Endothelial cell of umbilical vein (primary cell): ENCODE measurements at regions of chr4 and their contacts with region 1.

Region 1: GRCh38 chr4:25986807-25987206 is 72.8 kb downstream of the SMIM20 start:
- DNase-seq: no peak
- H3K4me3 ChIP-seq: no peak overlapping the region
- H3K27ac ChIP-seq: no peak overlapping the region
- H3K4me1 ChIP-seq: no peaks in the 10 kb centered on the region
- H3K27me3 ChIP-seq: peaks cover 0 to 2% of the 10 kb centered on the region in 2 experiments
- CTCF ChIP-seq: no peak
- POLR2A ChIP-seq: no peak

Region 2: DNA sequence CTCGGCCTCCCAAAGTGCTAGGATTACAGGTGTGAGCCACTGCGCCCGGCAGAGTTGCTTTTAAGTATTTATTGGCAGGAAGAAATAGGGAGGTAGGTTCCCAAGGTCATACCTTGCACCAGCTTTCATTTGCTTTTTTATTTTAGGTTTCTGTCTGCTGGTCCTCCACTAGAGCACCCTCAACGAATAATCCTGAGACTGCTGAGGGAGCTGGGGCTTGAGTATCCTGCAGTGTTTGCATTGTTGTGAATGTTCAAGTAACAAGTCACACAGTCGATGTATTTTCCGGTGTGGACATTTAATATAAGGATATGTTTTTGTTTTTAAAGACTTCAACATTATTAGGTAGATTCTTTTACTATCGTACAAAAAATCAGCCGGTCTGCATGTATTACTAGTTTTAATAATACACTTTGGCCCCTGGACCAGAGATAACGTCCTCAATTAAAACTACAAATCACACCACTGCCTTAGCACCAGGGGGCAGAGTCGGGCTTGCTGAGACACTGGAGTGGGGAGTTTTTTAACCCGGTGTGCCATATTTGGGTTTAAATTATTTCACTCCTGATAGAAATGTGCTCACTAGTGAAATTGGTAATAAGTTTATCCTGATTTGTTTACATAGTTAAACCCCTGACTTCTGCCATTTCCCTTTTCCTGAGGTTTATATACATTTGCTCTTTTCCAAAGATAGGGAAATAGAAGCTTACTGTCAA is 61.2 kb before region 1 on chr4:
- CTCF ChIA-PET with region 1: no interaction called
- POLR2A ChIA-PET with region 1: interaction called, 4 read pairs
- dilution Hi-C with region 1: no loop called
- intact Hi-C with region 1: loop called (anchors 5 kb)
- DNase-seq: peak; percentile 29
- H3K4me3 ChIP-seq: no peak overlapping the region
- H3K27ac ChIP-seq: no peak overlapping the region
- H3K4me1 ChIP-seq: no peaks in the 10 kb centered on the region
- H3K27me3 ChIP-seq: no peaks in the 10 kb centered on the region
- CTCF ChIP-seq: peak; percentile 53 to 58
- POLR2A ChIP-seq: no peak

Region 3: DNA sequence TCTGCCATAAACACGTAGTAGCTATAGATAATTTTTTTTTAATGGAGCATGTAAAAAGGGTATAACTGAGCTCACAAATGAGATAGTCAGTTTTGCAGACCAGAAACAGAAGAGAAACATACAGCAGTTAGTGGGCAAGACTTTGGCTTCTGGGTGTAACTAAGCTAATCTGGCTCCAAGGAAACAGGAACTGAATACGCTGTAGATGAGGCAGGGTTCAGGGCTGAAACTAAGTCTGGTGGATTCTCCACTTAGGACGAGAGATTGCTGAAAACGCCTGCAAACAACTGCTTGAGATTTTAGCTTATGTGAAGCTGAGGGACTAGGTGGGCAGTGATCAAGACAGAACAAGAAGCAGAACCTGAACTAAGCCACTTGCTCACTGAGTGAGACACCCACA is 19.0 kb after region 1 on chr4:
- CTCF ChIA-PET with region 1: interaction called, 12 read pairs
- POLR2A ChIA-PET with region 1: no interaction called
- dilution Hi-C with region 1: no loop called
- intact Hi-C with region 1: no loop called
- DNase-seq: no peak
- H3K4me3 ChIP-seq: no peak overlapping the region
- H3K27ac ChIP-seq: no peak overlapping the region
- H3K4me1 ChIP-seq: no peaks in the 10 kb centered on the region
- H3K27me3 ChIP-seq: peaks cover 0 to 5% of the 10 kb centered on the region in 2 experiments
- CTCF ChIP-seq: no peak
- POLR2A ChIP-seq: no peak